A673 (cell line): ENCODE measurements at regions of chr6 and their contacts with region 1.

Region 1: GRCh38 chr6:17673543-17674254 is 33.0 kb downstream of the NUP153 start:
- DNase-seq: no peak
- H3K4me3 ChIP-seq: no peak overlapping the region
- H3K27ac ChIP-seq: no peak overlapping the region
- H3K4me1 ChIP-seq: peaks cover 2% of the 10 kb centered on the region
- H3K27me3 ChIP-seq: no peaks in the 10 kb centered on the region
- CTCF ChIP-seq: no peak

Region 2: GRCh38 chr6:17688481-17688880 is 14.8 kb after region 1 on chr6:
- CTCF ChIA-PET with region 1: no interaction called
- POLR2A ChIA-PET with region 1: no interaction called
- intact Hi-C with region 1: loop called (anchors 1 kb)
- DNase-seq: no peak
- H3K4me3 ChIP-seq: no peak overlapping the region
- H3K27ac ChIP-seq: no peak overlapping the region
- H3K4me1 ChIP-seq: peaks cover 5% of the 10 kb centered on the region
- H3K27me3 ChIP-seq: no peaks in the 10 kb centered on the region
- CTCF ChIP-seq: no peak